T-cell (primary cell): ENCODE measurements at regions of chr1 and their contacts with region 1.

Region 1: GRCh38 chr1:53837924-53838652 is at the start of gene NDC1:
- DNase-seq: peak; percentile 78 to 95 (median 87)
- ATAC-seq: peak; percentile 89 to 94 (median 93)
- H3K4me3 ChIP-seq: peak within 1 kb of the TSS; percentile 59 to 68
- H3K4me3 Mint-ChIP-seq: peak within 1 kb of the TSS; percentile 87 to 99 (median 97)
- H3K27ac ChIP-seq: peak within 1 kb of the TSS; percentile 88
- H3K27ac Mint-ChIP-seq: peak within 1 kb of the TSS; percentile 99 to 100
- H3K4me1 ChIP-seq: peaks cover 5 to 14% of the 10 kb centered on the region in 2 experiments
- H3K4me1 Mint-ChIP-seq: peaks cover 22 to 30% (median 30%) of the 10 kb centered on the region in 3 donors
- H3K27me3 ChIP-seq: peaks cover 0 to 4% of the 10 kb centered on the region in 2 experiments
- H3K27me3 Mint-ChIP-seq: peaks cover 0 to 2% of the 10 kb centered on the region in 2 donors
- total RNA-seq, gene NDC1: 5.6 to 13.3 (median 12.2) TPM

Region 2: DNA sequence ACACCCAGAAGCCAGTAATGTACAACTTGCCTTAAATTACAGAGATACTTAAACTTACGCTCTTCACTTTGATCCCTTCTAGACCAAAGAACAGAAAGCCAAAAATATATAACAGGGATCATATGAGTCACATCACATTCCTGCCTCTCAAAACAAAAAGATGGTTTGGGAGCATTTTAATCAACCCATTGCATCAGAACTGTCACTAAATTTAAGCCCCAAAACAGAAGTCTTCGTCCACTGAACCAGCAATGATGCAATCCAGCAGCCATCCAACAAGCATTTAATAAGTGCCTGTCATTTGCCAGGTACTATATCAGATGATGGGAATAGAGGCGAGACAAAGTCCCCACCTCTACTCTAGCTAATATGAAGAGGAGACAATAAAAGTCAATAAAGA is 56.4 kb before region 1 on chr1:
- CTCF ChIA-PET with region 1: no interaction called
- POLR2A ChIA-PET with region 1: interaction called in 1 of 2 experiments, 10 read pairs
- DNase-seq: no peak
- ATAC-seq: no peak
- H3K4me3 ChIP-seq: no peak overlapping the region
- H3K4me3 Mint-ChIP-seq: no peak overlapping the region
- H3K27ac ChIP-seq: no peak overlapping the region
- H3K27ac Mint-ChIP-seq: no peak overlapping the region
- H3K4me1 ChIP-seq: no peaks in the 10 kb centered on the region
- H3K4me1 Mint-ChIP-seq: no peaks in the 10 kb centered on the region
- H3K27me3 ChIP-seq: no peaks in the 10 kb centered on the region
- H3K27me3 Mint-ChIP-seq: no peaks in the 10 kb centered on the region

Region 3: GRCh38 chr1:53821380-53821779 is 16.7 kb before region 1 on chr1:
- CTCF ChIA-PET with region 1: no interaction called
- POLR2A ChIA-PET with region 1: no interaction called
- DNase-seq: no peak
- ATAC-seq: no peak
- H3K4me3 ChIP-seq: no peak overlapping the region
- H3K4me3 Mint-ChIP-seq: no peak overlapping the region
- H3K27ac ChIP-seq: no peak overlapping the region
- H3K27ac Mint-ChIP-seq: no peak overlapping the region
- H3K4me1 ChIP-seq: no peaks in the 10 kb centered on the region
- H3K4me1 Mint-ChIP-seq: peaks cover 0 to 1% (median 0%) of the 10 kb centered on the region in 3 donors
- H3K27me3 ChIP-seq: no peaks in the 10 kb centered on the region
- H3K27me3 Mint-ChIP-seq: no peaks in the 10 kb centered on the region

Region 4: GRCh38 chr1:53878492-53879105 is 40.5 kb after region 1 on chr1:
- CTCF ChIA-PET with region 1: no interaction called
- POLR2A ChIA-PET with region 1: no interaction called
- DNase-seq: peak in 1 of 35 experiments; percentile 44
- ATAC-seq: no peak
- H3K4me3 ChIP-seq: no peak overlapping the region
- H3K4me3 Mint-ChIP-seq: no peak overlapping the region
- H3K27ac ChIP-seq: no peak overlapping the region
- H3K27ac Mint-ChIP-seq: no peak overlapping the region
- H3K4me1 ChIP-seq: no peaks in the 10 kb centered on the region
- H3K4me1 Mint-ChIP-seq: peaks cover 10 to 13% (median 11%) of the 10 kb centered on the region in 3 donors
- H3K27me3 ChIP-seq: no peaks in the 10 kb centered on the region
- H3K27me3 Mint-ChIP-seq: no peaks in the 10 kb centered on the region

Region 5: DNA sequence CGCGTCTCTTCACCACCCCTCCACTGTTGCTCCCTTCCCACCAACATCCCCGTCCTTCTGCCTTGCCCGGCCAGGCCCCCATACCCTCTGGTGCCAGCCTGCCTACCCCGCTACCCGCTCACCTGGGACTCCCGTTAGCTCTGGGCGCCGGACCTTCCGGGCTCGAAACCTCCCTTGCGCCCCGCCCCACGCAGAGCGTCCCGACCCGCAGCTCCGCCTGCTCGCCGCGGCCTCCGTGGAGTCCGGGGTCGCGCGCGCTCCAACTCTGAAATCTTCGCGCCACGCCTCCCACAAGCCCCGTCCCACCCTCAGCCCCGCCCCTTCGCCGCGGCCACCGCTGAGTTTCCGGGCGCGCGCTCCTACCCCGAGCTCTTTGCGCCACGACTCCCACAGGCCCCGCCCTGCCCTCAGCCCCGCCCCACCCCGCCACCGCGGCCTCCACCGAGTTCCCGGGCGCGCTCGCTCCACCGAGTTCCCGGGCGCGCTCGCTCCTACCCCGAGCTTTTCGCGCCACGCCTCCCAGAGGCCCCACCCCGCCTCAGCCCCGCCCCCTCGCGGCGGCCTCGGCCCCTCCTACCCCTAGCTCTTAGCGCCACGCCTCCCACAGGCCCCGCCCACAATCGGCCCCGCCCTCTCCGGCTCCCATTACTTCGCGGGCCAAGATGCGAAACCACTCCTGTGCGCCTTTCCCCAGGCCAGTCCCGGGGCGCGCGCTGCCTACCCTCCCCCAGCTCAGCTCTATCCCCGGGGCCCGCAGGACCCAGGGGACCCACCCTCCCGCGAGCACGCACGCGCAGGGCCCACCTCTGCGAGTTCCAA is 107.6 kb after region 1 on chr1 and contains the start of gene IFT25:
- CTCF ChIA-PET with region 1: interaction called in 1 of 2 experiments, 12 read pairs
- POLR2A ChIA-PET with region 1: no interaction called
- DNase-seq: peak; percentile 93 to 100 (median 97)
- ATAC-seq: peak; percentile 77 to 84 (median 79)
- H3K4me3 ChIP-seq: peak within 1 kb of the TSS; percentile 76 to 84
- H3K4me3 Mint-ChIP-seq: peak within 1 kb of the TSS; percentile 93 to 96 (median 96)
- H3K27ac ChIP-seq: peak within 1 kb of the TSS; percentile 75
- H3K27ac Mint-ChIP-seq: peak within 1 kb of the TSS; percentile 91 to 94
- H3K4me1 ChIP-seq: peaks cover 7 to 29% of the 10 kb centered on the region in 2 experiments
- H3K4me1 Mint-ChIP-seq: peaks cover 47 to 57% (median 52%) of the 10 kb centered on the region in 3 donors
- H3K27me3 ChIP-seq: no peaks in the 10 kb centered on the region
- H3K27me3 Mint-ChIP-seq: no peaks in the 10 kb centered on the region
- total RNA-seq, gene IFT25: 24.5 to 33.1 (median 31.2) TPM

Region 6: DNA sequence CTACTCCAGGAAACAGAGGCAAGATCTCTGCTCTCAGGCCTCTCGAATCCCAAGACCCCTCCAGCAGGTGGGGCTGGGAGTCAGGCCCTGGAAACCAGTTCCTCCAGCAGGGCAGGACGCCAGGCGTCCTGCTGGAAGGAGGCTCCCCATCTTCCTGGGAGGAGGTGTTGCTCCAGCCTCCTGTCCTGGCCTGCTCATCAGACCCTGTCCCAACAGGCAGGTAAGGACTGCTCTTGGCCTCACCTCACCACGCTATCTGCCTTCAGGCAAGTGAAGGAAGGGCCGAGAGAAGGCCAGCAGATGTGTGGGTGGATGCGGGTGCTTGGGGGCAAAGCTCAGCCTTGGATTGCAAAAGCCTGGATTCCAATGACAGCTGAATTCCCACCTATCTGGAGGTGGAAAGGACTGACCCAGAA is 485.2 kb after region 1 on chr1:
- CTCF ChIA-PET with region 1: no interaction called
- POLR2A ChIA-PET with region 1: no interaction called
- DNase-seq: no peak
- ATAC-seq: no peak
- H3K4me3 ChIP-seq: no peak overlapping the region
- H3K4me3 Mint-ChIP-seq: no peak overlapping the region
- H3K27ac ChIP-seq: no peak overlapping the region
- H3K27ac Mint-ChIP-seq: peak overlapping the region in 1 of 2 donors; percentile 44
- H3K4me1 ChIP-seq: peaks cover 2 to 41% of the 10 kb centered on the region in 2 experiments
- H3K4me1 Mint-ChIP-seq: peaks cover 71 to 85% (median 72%) of the 10 kb centered on the region in 3 donors
- H3K27me3 ChIP-seq: no peaks in the 10 kb centered on the region
- H3K27me3 Mint-ChIP-seq: no peaks in the 10 kb centered on the region